PC-9 (cell line): ENCODE measurements at regions of chr4 and their contacts with region 1.

Region 1: GRCh38 chr4:52822583-52823477 is 39.3 kb upstream of the RASL11B start:
- DNase-seq: peak; percentile 29 to 71
- H3K4me3 ChIP-seq: no peak overlapping the region
- H3K27ac ChIP-seq: peak overlapping the region; percentile 59
- H3K4me1 ChIP-seq: peaks cover 19% of the 10 kb centered on the region
- H3K27me3 ChIP-seq: no peaks in the 10 kb centered on the region
- CTCF ChIP-seq: no peak

Region 2: DNA sequence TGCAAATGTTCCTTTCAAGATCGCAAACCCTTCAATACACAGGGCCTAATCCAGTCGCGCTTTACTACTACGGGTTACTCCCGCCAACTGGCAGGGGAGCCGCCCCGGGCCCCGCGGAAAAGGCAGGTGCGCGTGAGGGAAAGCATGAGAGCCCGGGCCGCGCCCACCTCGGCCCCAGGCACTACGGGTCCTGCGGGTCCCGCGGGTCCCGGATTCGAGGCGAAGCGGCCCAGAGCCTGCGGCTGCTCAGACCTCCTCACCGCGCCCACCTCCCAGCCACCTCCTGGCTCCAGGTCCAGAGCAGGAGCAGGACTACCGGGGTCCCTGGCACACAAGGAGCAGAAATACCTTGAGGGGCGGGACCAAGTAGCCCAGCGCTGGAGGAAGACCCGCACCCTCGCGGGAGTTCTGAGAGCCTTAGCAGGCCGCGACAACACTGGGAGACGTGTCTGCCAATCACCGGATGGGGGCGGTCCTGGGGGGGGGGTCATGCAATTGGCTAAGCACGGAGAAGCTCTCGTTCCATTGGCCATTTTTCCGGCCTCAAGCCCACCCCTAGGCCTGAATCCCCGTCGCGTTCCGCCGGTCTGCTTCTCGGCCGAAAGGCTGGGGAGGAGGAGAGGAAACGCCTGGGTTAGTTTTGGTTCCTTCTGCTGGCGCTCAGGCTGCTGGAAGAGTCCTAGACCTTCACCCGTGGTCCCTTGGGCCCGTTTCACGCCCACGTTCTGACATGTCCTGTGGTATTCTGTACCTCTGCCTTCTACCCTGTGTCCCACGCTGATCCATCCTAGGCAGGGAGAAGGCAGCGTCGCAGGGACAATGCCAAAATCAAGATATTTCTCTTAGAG is 100.6 kb before region 1 on chr4:
- CTCF ChIA-PET with region 1: no interaction called
- POLR2A ChIA-PET with region 1: interaction called, 13 read pairs
- intact Hi-C with region 1: no loop called
- DNase-seq: peak; percentile 88 to 92
- H3K4me3 ChIP-seq: peak overlapping the region; percentile 79
- H3K27ac ChIP-seq: peak overlapping the region; percentile 42
- H3K4me1 ChIP-seq: peaks cover 11% of the 10 kb centered on the region; the same call in 1 of the 2 replicates
- H3K27me3 ChIP-seq: no peaks in the 10 kb centered on the region
- CTCF ChIP-seq: no peak

Region 3: DNA sequence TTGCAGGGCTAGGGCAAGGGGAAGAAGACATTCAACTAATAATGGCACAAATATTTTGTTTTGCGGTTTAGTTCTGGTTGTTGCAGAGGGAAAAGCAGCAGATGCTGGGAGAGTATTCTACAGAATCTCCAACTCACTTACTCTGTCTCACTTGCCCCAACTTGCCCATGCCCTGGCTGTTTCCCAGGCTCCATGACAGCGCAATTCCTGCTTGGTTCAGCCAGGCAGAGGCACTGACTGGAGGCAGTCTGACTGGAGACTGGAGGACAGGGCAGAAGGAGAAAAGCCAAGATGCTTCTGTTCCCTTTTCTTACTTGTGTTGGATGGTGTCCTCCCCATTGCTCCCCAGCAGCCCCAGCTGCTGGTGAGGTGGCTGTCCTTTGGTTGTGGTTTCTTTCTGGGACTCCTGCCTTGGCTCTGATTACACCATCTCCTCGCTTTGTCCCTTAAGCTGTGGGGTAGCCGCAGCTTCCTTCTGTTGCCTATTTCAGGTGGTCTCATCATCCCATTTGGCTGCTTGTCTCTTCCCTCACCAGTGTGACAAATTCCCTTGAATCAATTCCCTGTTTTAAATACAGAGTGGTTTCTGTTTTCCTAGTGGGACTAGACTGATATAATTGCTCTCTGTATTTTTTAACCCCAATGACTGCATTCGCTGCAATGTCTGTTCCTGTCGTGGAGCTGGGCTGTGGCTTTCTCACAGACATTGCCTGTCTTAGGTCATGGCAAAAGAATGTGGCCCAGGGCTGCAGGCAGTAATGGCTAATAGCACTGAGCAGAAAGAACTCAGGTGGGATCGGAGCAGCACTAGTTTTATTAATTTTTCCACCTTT is 15.1 kb after region 1 on chr4:
- CTCF ChIA-PET with region 1: no interaction called
- POLR2A ChIA-PET with region 1: interaction called, 3 read pairs
- intact Hi-C with region 1: loop called (anchors 2 kb)
- DNase-seq: peak; percentile 69 to 75
- H3K4me3 ChIP-seq: peak overlapping the region; percentile 21; the same call in 1 of the 2 replicates
- H3K27ac ChIP-seq: peak overlapping the region; percentile 76
- H3K4me1 ChIP-seq: peaks cover 29% of the 10 kb centered on the region
- H3K27me3 ChIP-seq: no peaks in the 10 kb centered on the region
- CTCF ChIP-seq: no peak

Region 4: DNA sequence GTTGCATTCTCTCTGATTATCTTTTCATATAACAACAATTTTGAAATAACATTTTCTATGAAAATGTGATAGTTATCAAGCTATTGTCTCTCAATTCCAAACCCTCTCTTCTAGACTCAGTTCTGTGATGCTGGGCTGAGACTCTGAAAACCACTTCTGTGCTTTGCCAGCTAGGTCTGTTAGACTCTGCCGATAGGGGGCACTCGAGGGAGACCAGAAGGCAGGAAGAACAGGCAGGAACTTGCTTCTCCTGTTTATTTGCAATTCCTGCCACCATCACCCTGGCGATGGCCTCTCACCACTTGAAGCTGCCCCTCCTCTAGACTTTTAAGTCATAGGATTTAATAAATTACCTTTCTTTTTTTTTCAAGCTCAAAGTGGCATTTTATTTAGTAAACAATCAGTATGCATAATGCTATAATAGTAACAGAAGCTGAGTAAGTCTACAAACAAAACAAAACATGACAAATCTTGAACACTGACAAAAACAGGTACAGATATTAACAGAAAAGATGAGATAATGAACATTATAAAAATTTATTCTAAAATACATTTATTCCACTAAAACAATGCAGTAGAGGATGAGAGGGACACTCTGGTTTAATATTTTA is 89.0 kb after region 1 on chr4:
- CTCF ChIA-PET with region 1: interaction called, 4 read pairs
- POLR2A ChIA-PET with region 1: no interaction called
- intact Hi-C with region 1: loop called (anchors 2 kb)
- DNase-seq: peak; percentile 59 to 71
- H3K4me3 ChIP-seq: no peak overlapping the region
- H3K27ac ChIP-seq: no peak overlapping the region
- H3K4me1 ChIP-seq: peaks cover 44% of the 10 kb centered on the region
- H3K27me3 ChIP-seq: no peaks in the 10 kb centered on the region
- CTCF ChIP-seq: peak; percentile 80